Psoas muscle (tissue), 8 donors: ENCODE measurements at regions of chr3 and their contacts with region 1.

Region 1: GRCh38 chr3:37210230-37210629 is 35.8 kb upstream of the LRRFIP2 start:
- DNase-seq: no peak
- ATAC-seq: no peak
- H3K4me3 ChIP-seq: no peak overlapping the region
- H3K27ac ChIP-seq: no peak overlapping the region
- H3K4me1 ChIP-seq: no peaks in the 10 kb centered on the region
- H3K27me3 ChIP-seq: no peaks in the 10 kb centered on the region
- CTCF ChIP-seq: no peak

Region 2: DNA sequence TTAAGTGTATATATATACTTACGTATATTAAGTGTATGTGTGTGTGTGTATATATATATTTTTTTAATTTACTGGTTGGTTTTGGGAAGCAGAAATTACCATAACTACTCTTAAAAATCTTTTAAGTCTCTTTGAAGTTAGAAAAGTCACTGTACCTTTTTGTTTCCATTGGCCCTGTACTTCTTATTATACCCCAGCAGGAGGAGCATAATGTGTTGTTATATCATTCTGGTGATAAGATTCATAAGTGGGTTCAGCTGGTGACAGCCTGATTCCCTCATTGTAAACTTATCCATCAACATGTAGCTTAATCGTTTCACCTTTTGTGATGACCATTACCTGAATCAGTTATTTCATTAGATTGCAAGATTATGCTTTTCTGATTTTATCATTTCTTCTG is 186.1 kb before region 1 on chr3:
- intact Hi-C with region 1: loop called (anchors 5 kb)
- DNase-seq: no peak
- ATAC-seq: no peak
- H3K4me3 ChIP-seq: no peak overlapping the region
- H3K27ac ChIP-seq: no peak overlapping the region
- H3K4me1 ChIP-seq: peaks cover 8% of the 10 kb centered on the region
- H3K27me3 ChIP-seq: no peaks in the 10 kb centered on the region
- CTCF ChIP-seq: peak; percentile 38

Region 3: GRCh38 chr3:37174532-37175126 is 35.6 kb before region 1 on chr3 and contains the start of gene LRRFIP2:
- intact Hi-C with region 1: loop called in 1 of 2 experiments (anchors 5 kb)
- DNase-seq: no peak
- ATAC-seq: no peak
- H3K4me3 ChIP-seq: peak within 1 kb of the TSS; percentile 92
- H3K27ac ChIP-seq: peak within 1 kb of the TSS; percentile 98
- H3K4me1 ChIP-seq: peaks cover 76% of the 10 kb centered on the region
- H3K27me3 ChIP-seq: no peaks in the 10 kb centered on the region
- CTCF ChIP-seq: no peak
- total RNA-seq, gene LRRFIP2: 124 to 163 (median 138) TPM